ENCODE measurements at regions of chr10 and their contacts with region 1.

Region 1: DNA sequence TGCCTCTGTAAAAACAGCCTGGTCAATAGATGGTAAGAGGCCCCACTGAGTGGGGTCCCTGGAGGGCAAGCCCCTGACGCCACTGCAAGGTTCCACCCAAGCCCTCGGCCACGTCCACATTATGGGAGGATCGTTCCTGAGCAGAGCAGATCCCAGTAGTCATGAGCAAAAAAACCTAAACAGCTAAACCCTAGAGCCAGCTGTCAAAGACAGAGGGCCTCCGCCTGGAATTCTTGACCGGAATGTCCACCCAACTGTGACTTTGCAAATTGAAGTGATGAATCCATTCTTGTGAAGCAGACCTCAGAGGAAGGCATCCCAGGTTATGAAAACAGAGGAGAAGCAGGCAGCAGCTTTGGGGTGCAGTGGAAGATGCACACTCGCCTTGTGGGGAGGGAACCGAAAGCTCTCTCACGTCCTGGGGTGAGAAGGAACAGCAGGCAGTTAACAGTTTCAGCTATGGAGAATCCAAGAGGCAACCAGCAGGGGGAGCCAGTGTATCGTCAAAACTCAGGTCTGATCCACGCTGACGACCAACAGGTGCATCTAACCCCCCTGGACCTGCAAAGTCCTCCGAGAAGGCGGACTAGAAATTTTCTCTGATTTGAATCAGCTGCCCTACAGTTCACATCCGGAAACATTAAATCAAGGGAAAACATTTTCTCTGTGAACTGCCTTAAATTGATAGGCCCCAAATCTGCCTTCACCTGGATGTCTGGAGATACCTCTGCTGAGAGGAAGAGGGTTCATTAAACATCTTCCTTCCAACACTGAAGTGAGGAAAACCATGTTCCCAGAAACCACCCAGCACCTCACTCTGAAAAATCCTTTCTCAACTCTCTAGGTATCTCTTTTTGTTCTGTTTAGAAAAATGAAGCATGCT is 139.1 kb upstream of the PFKP start:
- DNase-seq: peak in 2 of 4 donors; percentile 46 to 51
- ATAC-seq: peak; percentile 90
- H3K4me3 ChIP-seq: no peak overlapping the region
- H3K27ac ChIP-seq: no peak overlapping the region
- H3K4me1 ChIP-seq: peaks cover 0 to 9% of the 10 kb centered on the region in 2 donors
- H3K27me3 ChIP-seq: peaks cover 0 to 11% of the 10 kb centered on the region in 2 donors
- CTCF ChIP-seq: peak; percentile 52 to 70

Region 2: DNA sequence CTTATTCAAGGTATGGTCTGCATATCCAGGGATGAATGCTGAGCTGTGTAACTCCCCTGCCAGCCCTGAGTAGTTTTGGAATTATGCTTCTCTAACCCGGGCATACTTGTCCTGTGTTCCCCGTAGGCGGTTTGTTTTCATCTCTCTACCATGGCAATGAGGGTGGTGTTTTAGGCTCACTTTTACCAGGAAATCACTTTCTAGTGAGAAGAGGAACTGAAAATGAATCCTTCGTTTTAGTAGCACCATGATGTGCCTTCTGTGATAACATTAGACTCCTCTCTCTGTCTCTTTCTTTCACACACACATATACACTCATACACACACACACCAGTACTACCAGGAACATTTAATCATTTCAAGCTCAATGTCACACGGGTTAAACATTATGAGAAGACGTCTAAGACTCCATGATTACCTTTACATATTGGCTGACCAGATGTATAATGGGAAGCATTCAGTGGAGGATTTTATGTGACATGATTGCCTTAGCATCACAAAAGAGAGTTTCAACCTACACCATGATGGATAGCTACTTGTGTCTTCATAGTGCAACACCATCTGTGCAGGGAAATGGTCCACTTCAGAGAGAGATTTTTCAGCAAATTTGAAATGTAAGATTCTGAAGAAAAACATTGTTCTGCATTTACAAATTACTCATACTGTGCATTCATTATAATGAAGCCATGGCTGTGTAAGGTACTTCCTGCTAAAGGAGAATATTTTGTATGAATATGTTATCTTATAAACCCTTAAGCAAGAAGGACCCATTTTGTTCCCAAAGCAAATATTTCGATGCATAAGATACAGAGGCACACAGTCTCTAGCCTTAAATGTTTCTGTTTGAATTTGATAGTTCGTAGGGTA is 108.2 kb after region 1 on chr10:
- intact Hi-C with region 1: loop called in 1 of 2 experiments (anchors 10 kb)
- DNase-seq: no peak
- ATAC-seq: peak; percentile 48
- H3K4me3 ChIP-seq: no peak overlapping the region
- H3K27ac ChIP-seq: no peak overlapping the region
- H3K4me1 ChIP-seq: peaks cover 0 to 4% of the 10 kb centered on the region in 2 donors
- H3K27me3 ChIP-seq: no peaks in the 10 kb centered on the region
- CTCF ChIP-seq: no peak

Region 3: GRCh38 chr10:3668276-3668965 is 740.2 kb after region 1 on chr10:
- intact Hi-C with region 1: no loop called
- DNase-seq: peak; percentile 47 to 86 (median 68)
- ATAC-seq: peak; percentile 90
- H3K4me3 ChIP-seq: peak overlapping the region; percentile 2 to 30
- H3K27ac ChIP-seq: peak overlapping the region; percentile 53 to 93
- H3K4me1 ChIP-seq: peaks cover 0 to 48% of the 10 kb centered on the region in 2 donors
- H3K27me3 ChIP-seq: no peaks in the 10 kb centered on the region
- CTCF ChIP-seq: no peak